Endothelial cell of umbilical vein (primary cell): ENCODE measurements at regions of chr20 and their contacts with region 1.

Region 1: GRCh38 chr20:18276821-18277220 is 11.5 kb upstream of the ZNF133 start:
- DNase-seq: peak; percentile 59
- H3K4me3 ChIP-seq: no peak overlapping the region
- H3K27ac ChIP-seq: no peak overlapping the region
- H3K4me1 ChIP-seq: no peaks in the 10 kb centered on the region
- H3K27me3 ChIP-seq: peaks cover 13 to 17% of the 10 kb centered on the region in 2 experiments
- CTCF ChIP-seq: peak; percentile 86 to 89
- POLR2A ChIP-seq: no peak

Region 2: DNA sequence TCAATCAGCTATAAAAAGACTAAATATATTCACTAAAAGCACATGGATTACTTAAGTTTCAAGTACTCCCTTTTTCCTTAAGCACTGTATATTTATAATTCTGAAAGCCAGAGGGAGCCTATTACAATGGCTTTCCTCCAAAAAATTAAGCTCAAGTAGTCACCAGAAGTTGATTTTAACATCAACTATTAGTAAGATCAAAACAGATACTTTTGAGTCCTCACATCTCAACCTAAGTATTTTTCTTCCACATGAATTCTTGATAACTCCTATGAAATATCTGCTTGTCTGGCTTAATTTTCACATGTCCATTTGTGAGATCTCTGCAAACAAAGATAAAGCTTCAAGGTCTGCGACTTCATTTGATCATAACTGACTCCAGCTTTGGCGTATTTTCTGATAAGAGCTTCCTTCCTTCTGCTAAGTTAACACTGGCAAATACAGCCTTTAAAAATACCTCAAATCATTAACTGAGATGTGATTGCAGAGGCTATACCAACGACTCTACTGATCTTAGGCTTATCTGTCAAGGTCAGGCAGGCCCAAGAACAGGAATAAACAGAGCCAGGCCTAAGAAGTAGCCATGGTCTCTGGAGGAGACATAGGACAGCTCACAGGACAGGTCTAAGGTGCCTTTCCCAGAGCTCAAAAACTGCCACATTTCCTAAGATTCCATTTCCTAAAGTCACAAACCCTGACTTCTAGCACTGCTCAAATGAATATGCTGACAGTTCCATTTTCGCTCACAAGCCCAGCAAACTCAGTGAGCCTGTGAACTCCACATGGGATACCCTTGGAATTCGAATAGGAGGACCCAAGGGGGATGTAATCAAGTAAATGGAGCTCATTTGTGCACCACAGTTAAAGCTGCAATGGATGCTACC is 318.2 kb before region 1 on chr20:
- CTCF ChIA-PET with region 1: no interaction called
- POLR2A ChIA-PET with region 1: no interaction called
- dilution Hi-C with region 1: no loop called
- intact Hi-C with region 1: loop called (anchors 5 kb)
- DNase-seq: peak; percentile 75
- H3K4me3 ChIP-seq: no peak overlapping the region
- H3K27ac ChIP-seq: no peak overlapping the region
- H3K4me1 ChIP-seq: peaks cover 49% of the 10 kb centered on the region
- H3K27me3 ChIP-seq: no peaks in the 10 kb centered on the region
- CTCF ChIP-seq: no peak
- POLR2A ChIP-seq: peak; percentile 19

Region 3: GRCh38 chr20:18066421-18067336 is 210.1 kb before region 1 on chr20:
- CTCF ChIA-PET with region 1: interaction called, 3 read pairs
- POLR2A ChIA-PET with region 1: no interaction called
- dilution Hi-C with region 1: no loop called
- intact Hi-C with region 1: loop called (anchors 1 kb)
- DNase-seq: no peak
- H3K4me3 ChIP-seq: no peak overlapping the region
- H3K27ac ChIP-seq: no peak overlapping the region
- H3K4me1 ChIP-seq: no peaks in the 10 kb centered on the region
- H3K27me3 ChIP-seq: peaks cover 0 to 4% of the 10 kb centered on the region in 2 experiments
- CTCF ChIP-seq: no peak
- POLR2A ChIP-seq: no peak

Region 4: GRCh38 chr20:18314786-18315406 is 38.1 kb after region 1 on chr20:
- CTCF ChIA-PET with region 1: no interaction called
- POLR2A ChIA-PET with region 1: no interaction called
- dilution Hi-C with region 1: no loop called
- intact Hi-C with region 1: no loop called
- DNase-seq: no peak
- H3K4me3 ChIP-seq: no peak overlapping the region
- H3K27ac ChIP-seq: no peak overlapping the region
- H3K4me1 ChIP-seq: no peaks in the 10 kb centered on the region
- H3K27me3 ChIP-seq: no peaks in the 10 kb centered on the region
- CTCF ChIP-seq: no peak
- POLR2A ChIP-seq: no peak